HEK293 (cell line): ENCODE measurements at regions of chr9 and their contacts with region 1.

Region 1: GRCh38 chr9:136769710-136770191 is 5.4 kb upstream of the LCN15 start:
- H3K4me3 ChIP-seq: no peak overlapping the region
- H3K27ac ChIP-seq: no peak overlapping the region
- H3K4me1 ChIP-seq: no peaks in the 10 kb centered on the region
- CTCF ChIP-seq: peak; percentile 59

Region 2: GRCh38 chr9:136757328-136757727 is 12.4 kb before region 1 on chr9:
- CTCF ChIA-PET with region 1: interaction called, 30 read pairs
- POLR2A ChIA-PET with region 1: no interaction called
- H3K4me3 ChIP-seq: no peak overlapping the region
- H3K27ac ChIP-seq: no peak overlapping the region
- H3K4me1 ChIP-seq: no peaks in the 10 kb centered on the region
- CTCF ChIP-seq: no peak

Region 3: GRCh38 chr9:136784249-136784996 is 14.7 kb after region 1 on chr9:
- CTCF ChIA-PET with region 1: interaction called, 79 read pairs
- POLR2A ChIA-PET with region 1: no interaction called
- H3K4me3 ChIP-seq: no peak overlapping the region
- H3K27ac ChIP-seq: no peak overlapping the region
- H3K4me1 ChIP-seq: no peaks in the 10 kb centered on the region; the same call in 1 of the 2 replicates
- CTCF ChIP-seq: 0 out of 2 replicates have a peak, but pooled peaks have one; percentile 25

Region 4: GRCh38 chr9:136807281-136808074 is 37.7 kb after region 1 on chr9 and contains the start of gene RABL6:
- CTCF ChIA-PET with region 1: no interaction called
- POLR2A ChIA-PET with region 1: no interaction called
- H3K4me3 ChIP-seq: peak within 1 kb of the TSS; percentile 84
- H3K27ac ChIP-seq: peak within 1 kb of the TSS; percentile 96
- H3K4me1 ChIP-seq: peaks cover 7% of the 10 kb centered on the region; the same call in 1 of the 2 replicates
- CTCF ChIP-seq: no peak

Region 5: GRCh38 chr9:136881691-136882108 is 111.9 kb after region 1 on chr9:
- CTCF ChIA-PET with region 1: no interaction called
- POLR2A ChIA-PET with region 1: no interaction called
- H3K4me3 ChIP-seq: no peak overlapping the region
- H3K27ac ChIP-seq: no peak overlapping the region
- H3K4me1 ChIP-seq: no peaks in the 10 kb centered on the region
- CTCF ChIP-seq: no peak